Heart left ventricle (tissue), 16 donors: ENCODE measurements at regions of chr1 and their contacts with region 1.

Region 1: GRCh38 chr1:176545034-176545639 is 82.2 kb downstream of the PAPPA2 start:
- DNase-seq: no peak
- ATAC-seq: no peak
- H3K4me3 ChIP-seq: no peak overlapping the region
- H3K27ac ChIP-seq: no peak overlapping the region
- H3K4me1 ChIP-seq: no peaks in the 10 kb centered on the region
- H3K27me3 ChIP-seq: peaks cover 0 to 9% (median 0%) of the 10 kb centered on the region in 9 donors
- CTCF ChIP-seq: no peak
- POLR2A ChIP-seq: no peak

Region 2: DNA sequence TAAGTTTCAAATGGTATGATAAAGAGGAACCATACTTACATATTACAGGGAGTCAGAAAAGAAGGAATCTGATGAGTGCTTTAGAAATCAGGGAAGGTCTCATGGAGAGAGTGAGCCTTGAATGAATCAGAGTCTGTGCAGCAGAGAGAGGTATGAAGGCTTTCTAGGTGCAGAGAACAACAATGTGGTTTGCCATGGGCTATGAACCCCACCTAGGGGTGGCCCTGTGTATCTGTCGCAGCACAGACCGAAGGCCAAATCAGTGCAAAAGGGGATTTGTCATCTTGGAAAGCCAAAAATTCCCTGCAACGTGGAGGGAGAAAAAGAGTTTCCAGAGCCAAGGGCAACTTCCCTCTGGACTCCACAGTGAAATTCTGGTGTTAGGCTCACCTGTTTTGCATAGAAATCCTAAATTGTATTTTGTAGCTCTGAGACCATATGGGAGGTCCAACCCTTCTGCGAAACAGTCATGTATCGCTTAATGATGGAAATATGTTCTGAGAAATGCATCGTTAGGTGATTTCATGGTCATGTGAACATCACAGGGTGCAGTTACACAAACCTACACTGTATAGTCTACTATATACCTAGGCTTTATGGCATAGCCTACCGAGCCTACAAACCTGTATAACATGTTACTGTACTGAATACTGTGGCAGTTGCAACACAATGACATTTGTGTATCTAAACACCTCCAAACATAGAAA is 78.5 kb before region 1 on chr1:
- intact Hi-C with region 1: no loop called
- DNase-seq: no peak
- ATAC-seq: peak in 2 of 4 donors; percentile 43 to 48
- H3K4me3 ChIP-seq: no peak overlapping the region
- H3K27ac ChIP-seq: no peak overlapping the region
- H3K4me1 ChIP-seq: peaks cover 0 to 8% (median 0%) of the 10 kb centered on the region in 12 donors
- H3K27me3 ChIP-seq: no peaks in the 10 kb centered on the region
- CTCF ChIP-seq: peak in 8 of 12 donors; percentile 6 to 38 (median 19)
- POLR2A ChIP-seq: no peak

Region 3: DNA sequence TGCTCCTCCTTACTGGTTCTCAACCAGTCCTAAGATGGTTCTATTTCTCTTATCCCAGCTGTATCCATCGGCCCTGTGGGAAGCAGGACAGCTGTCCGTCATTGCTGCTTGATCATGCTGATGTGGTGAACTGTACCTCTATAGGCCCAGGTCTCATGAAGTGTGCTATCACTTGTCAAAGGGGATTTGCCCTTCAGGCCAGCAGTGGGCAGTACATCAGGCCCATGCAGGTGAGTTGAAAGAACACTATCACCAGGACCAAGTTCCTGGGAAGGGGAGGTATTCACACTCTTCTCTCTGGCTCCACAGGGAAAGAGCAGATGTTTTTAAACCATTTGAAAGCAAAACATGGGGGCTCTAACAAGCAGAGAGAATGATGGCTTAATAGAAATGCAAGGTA is 220.5 kb after region 1 on chr1:
- intact Hi-C with region 1: no loop called
- DNase-seq: no peak
- ATAC-seq: no peak
- H3K4me3 ChIP-seq: no peak overlapping the region
- H3K27ac ChIP-seq: no peak overlapping the region
- H3K4me1 ChIP-seq: no peaks in the 10 kb centered on the region
- H3K27me3 ChIP-seq: no peaks in the 10 kb centered on the region
- CTCF ChIP-seq: no peak
- POLR2A ChIP-seq: no peak

Region 4: GRCh38 chr1:176820391-176821031 is 275.4 kb after region 1 on chr1:
- intact Hi-C with region 1: no loop called
- DNase-seq: no peak
- ATAC-seq: no peak
- H3K4me3 ChIP-seq: no peak overlapping the region
- H3K27ac ChIP-seq: no peak overlapping the region
- H3K4me1 ChIP-seq: no peaks in the 10 kb centered on the region
- H3K27me3 ChIP-seq: no peaks in the 10 kb centered on the region
- CTCF ChIP-seq: no peak
- POLR2A ChIP-seq: no peak

Region 5: DNA sequence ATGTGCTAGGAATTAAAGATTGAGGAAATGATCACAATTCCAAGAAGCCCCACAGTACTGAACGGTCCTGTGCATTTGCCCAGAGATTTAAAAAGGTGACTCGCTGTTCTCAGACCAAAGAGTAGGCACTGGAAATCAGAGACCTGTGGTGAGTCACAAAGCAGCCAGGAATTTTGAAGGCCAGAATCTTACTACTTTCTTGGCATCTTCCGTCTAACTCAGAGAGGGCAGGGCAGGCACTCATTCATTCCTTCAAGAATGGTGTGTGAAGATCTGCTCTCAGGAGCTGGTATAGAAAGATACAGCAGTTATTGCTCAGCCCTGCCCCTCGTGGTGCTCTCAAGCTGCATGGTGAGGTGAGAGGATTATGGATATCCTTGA is 683.6 kb after region 1 on chr1:
- intact Hi-C with region 1: loop called in 1 of 10 experiments (anchors 5 kb)
- DNase-seq: no peak
- ATAC-seq: no peak
- H3K4me3 ChIP-seq: no peak overlapping the region
- H3K27ac ChIP-seq: no peak overlapping the region
- H3K4me1 ChIP-seq: peaks cover 0 to 5% (median 0%) of the 10 kb centered on the region in 12 donors
- H3K27me3 ChIP-seq: no peaks in the 10 kb centered on the region
- CTCF ChIP-seq: no peak
- POLR2A ChIP-seq: no peak